ENCODE measurements at regions of chr5 and their contacts with region 1.

Region 1: GRCh38 chr5:111735583-111736270 is 21.3 kb downstream of the NREP start:
- DNase-seq: peak; percentile 80
- ATAC-seq: peak; percentile 90
- H3K4me3 Mint-ChIP-seq: no peak overlapping the region
- H3K27ac Mint-ChIP-seq: no peak overlapping the region
- H3K4me1 Mint-ChIP-seq: peaks cover 24% of the 10 kb centered on the region
- H3K27me3 Mint-ChIP-seq: no peaks in the 10 kb centered on the region

Region 2: GRCh38 chr5:111757355-111758283 is 21.9 kb after region 1 on chr5:
- CTCF ChIA-PET with region 1: interaction called, 5 read pairs
- POLR2A ChIA-PET with region 1: no interaction called
- intact Hi-C with region 1: loop called in 1 of 2 experiments (anchors 2 kb)
- DNase-seq: peak; percentile 91
- ATAC-seq: peak; percentile 78
- H3K4me3 Mint-ChIP-seq: peak overlapping the region; percentile 80
- H3K27ac Mint-ChIP-seq: peak overlapping the region; percentile 86
- H3K4me1 Mint-ChIP-seq: peaks cover 18% of the 10 kb centered on the region
- H3K27me3 Mint-ChIP-seq: peaks cover 3% of the 10 kb centered on the region

Measured in activated CD4-positive, alpha-beta T cell treated with anti-CD3 and anti-CD28 coated beads for 36 hours (primary cell).